Esophagus muscularis mucosa (tissue), 4 donors: ENCODE measurements at regions of chr9 and their contacts with region 1.

Region 1: DNA sequence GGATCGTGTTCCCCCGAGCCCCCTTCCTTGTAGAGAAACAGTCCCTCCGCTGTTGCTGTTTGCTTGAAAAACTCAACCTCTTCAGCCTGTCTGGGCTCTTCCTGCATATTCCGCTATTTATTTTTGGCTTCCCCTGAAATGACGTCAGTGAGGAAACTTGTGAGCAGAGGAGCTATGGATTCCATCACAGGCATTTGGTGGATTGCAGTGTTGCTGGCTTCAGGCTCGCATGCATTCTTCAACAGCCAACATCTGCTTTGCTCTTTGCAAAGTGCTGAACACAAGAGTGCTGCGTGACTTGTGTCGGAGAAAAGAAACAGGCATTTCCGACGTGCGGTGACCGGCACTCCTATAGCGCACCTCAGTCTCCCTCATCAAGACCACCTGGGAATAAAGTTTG is 232.7 kb downstream of the RFK start:
- DNase-seq: no peak
- H3K4me3 ChIP-seq: no peak overlapping the region
- H3K27ac ChIP-seq: peak overlapping the region; percentile 43 to 57 (median 55)
- H3K4me1 ChIP-seq: peaks cover 12 to 38% (median 35%) of the 10 kb centered on the region in 4 donors
- H3K27me3 ChIP-seq: no peaks in the 10 kb centered on the region
- CTCF ChIP-seq: no peak
- EP300 ChIP-seq: no peak
- POLR2A ChIP-seq: no peak

Region 2: DNA sequence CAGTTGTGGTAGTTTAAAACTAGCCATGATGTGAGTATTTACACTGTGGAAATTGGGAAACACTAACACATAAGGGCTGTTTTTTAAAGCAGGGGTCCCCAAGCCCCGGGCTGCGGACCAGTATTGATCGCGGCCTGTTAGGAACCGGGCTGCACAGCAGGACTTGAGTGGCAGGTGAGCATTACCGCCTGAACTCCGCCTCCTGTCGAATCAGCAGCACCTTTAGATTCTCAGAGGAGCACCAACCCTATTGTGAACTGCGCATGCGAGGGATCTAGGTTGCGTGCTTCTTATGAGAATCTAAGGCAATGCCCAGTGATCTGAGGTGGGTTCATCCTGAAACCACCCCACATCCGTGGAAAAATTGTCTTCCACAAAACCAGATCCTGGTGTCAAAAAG is 143.3 kb before region 1 on chr9:
- intact Hi-C with region 1: loop called (anchors 5 kb)
- DNase-seq: no peak
- H3K4me3 ChIP-seq: no peak overlapping the region
- H3K27ac ChIP-seq: no peak overlapping the region
- H3K4me1 ChIP-seq: peaks cover 0 to 8% (median 0%) of the 10 kb centered on the region in 4 donors
- H3K27me3 ChIP-seq: no peaks in the 10 kb centered on the region
- CTCF ChIP-seq: no peak
- EP300 ChIP-seq: no peak
- POLR2A ChIP-seq: no peak